ENCODE measurements at regions of chr13 and their contacts with region 1.

Region 1: GRCh38 chr13:27079421-27079958 is 92.1 kb downstream of the USP12 start:
- DNase-seq: no peak
- ATAC-seq: no peak
- H3K4me3 ChIP-seq: no peak overlapping the region
- H3K27ac ChIP-seq: no peak overlapping the region
- H3K4me1 ChIP-seq: peaks cover 0 to 18% (median 14%) of the 10 kb centered on the region in 12 donors
- H3K27me3 ChIP-seq: no peaks in the 10 kb centered on the region
- CTCF ChIP-seq: no peak
- POLR2A ChIP-seq: no peak

Region 2: DNA sequence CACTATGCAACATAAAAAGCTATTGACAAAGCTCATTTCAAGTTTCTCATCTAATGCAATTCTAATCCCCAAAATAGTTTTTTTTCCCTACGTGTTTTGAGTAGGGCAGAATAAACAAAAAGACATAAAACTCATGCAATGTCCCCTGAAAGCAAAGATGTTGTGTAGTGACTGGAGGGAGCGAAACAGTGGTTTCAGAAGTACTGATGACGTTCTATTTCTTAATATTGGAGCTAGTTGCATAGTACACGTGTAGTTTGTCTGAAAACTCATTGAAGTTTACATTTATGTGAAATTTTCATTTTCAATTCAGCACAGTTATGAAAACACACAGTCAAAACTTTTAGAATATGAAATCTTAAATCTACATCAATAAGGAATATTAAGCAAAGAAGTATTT is 60.6 kb after region 1 on chr13:
- intact Hi-C with region 1: loop called in 1 of 10 experiments (anchors 2 kb)
- DNase-seq: no peak
- ATAC-seq: no peak
- H3K4me3 ChIP-seq: no peak overlapping the region
- H3K27ac ChIP-seq: no peak overlapping the region
- H3K4me1 ChIP-seq: peaks cover 0 to 15% (median 4%) of the 10 kb centered on the region in 12 donors
- H3K27me3 ChIP-seq: no peaks in the 10 kb centered on the region
- CTCF ChIP-seq: no peak
- POLR2A ChIP-seq: no peak

Region 3: GRCh38 chr13:27161980-27162379 is 82.5 kb after region 1 on chr13:
- intact Hi-C with region 1: loop called in 1 of 10 experiments (anchors 5 kb)
- DNase-seq: no peak
- ATAC-seq: peak in 2 of 4 donors; percentile 48 to 61
- H3K4me3 ChIP-seq: no peak overlapping the region
- H3K27ac ChIP-seq: peak overlapping the region in 1 of 12 donors; percentile 71
- H3K4me1 ChIP-seq: peaks cover 0 to 65% (median 29%) of the 10 kb centered on the region in 12 donors
- H3K27me3 ChIP-seq: no peaks in the 10 kb centered on the region
- CTCF ChIP-seq: no peak
- POLR2A ChIP-seq: no peak

Measured in heart left ventricle (tissue), 16 donors.